ENCODE measurements at regions of chr11 and their contacts with region 1.

Region 1: GRCh38 chr11:72772978-72773690 is 20.7 kb downstream of the STARD10 start:
- DNase-seq: peak in 1 of 2 donors; percentile 48
- ATAC-seq: peak; percentile 62 to 88 (median 82)
- H3K4me3 ChIP-seq: no peak overlapping the region
- H3K27ac ChIP-seq: peak overlapping the region in 6 of 10 donors; percentile 40 to 69 (median 50)
- H3K4me1 ChIP-seq: peaks cover 9 to 44% (median 36%) of the 10 kb centered on the region in 9 donors
- H3K27me3 ChIP-seq: no peaks in the 10 kb centered on the region
- CTCF ChIP-seq: no peak

Region 2: GRCh38 chr11:72736452-72737069 is 36.6 kb before region 1 on chr11:
- intact Hi-C with region 1: loop called in 1 of 10 experiments (anchors 5 kb)
- DNase-seq: peak in 1 of 2 donors; percentile 56
- ATAC-seq: peak; percentile 16 to 60 (median 43)
- H3K4me3 ChIP-seq: peak overlapping the region in 1 of 10 donors; percentile 54
- H3K27ac ChIP-seq: peak overlapping the region in 8 of 10 donors; percentile 37 to 98 (median 66)
- H3K4me1 ChIP-seq: peaks cover 0 to 87% (median 26%) of the 10 kb centered on the region in 9 donors
- H3K27me3 ChIP-seq: no peaks in the 10 kb centered on the region
- CTCF ChIP-seq: no peak

Region 3: GRCh38 chr11:72753341-72754148 is 19.6 kb before region 1 on chr11:
- intact Hi-C with region 1: loop called in 1 of 10 experiments (anchors 2 kb)
- DNase-seq: no peak
- ATAC-seq: peak in 3 of 8 donors; percentile 14 to 17 (median 15)
- H3K4me3 ChIP-seq: peak overlapping the region in 1 of 10 donors; percentile 58
- H3K27ac ChIP-seq: no peak overlapping the region
- H3K4me1 ChIP-seq: peaks cover 4 to 40% (median 22%) of the 10 kb centered on the region in 9 donors
- H3K27me3 ChIP-seq: no peaks in the 10 kb centered on the region
- CTCF ChIP-seq: peak in 2 of 9 donors; percentile 13 to 25

Measured in heart right ventricle (tissue), 16 donors.